Natural killer cell (primary cell): ENCODE measurements at regions of chr14 and their contacts with region 1.

Region 1: GRCh38 chr14:51884086-51884927 is 23.9 kb downstream of the GNG2 start:
- DNase-seq: peak in 1 of 2 donors; percentile 37
- ATAC-seq: peak; percentile 69 to 87 (median 75)
- H3K4me3 ChIP-seq: no peak overlapping the region
- H3K4me3 Mint-ChIP-seq: peak overlapping the region; percentile 86
- H3K27ac ChIP-seq: peak overlapping the region; percentile 76
- H3K27ac Mint-ChIP-seq: peak overlapping the region; percentile 94 to 99
- H3K4me1 ChIP-seq: peaks cover 30% of the 10 kb centered on the region
- H3K4me1 Mint-ChIP-seq: peaks cover 82 to 87% of the 10 kb centered on the region in 2 donors
- H3K27me3 ChIP-seq: no peaks in the 10 kb centered on the region
- H3K27me3 Mint-ChIP-seq: no peaks in the 10 kb centered on the region
- CTCF ChIP-seq: no peak

Region 2: DNA sequence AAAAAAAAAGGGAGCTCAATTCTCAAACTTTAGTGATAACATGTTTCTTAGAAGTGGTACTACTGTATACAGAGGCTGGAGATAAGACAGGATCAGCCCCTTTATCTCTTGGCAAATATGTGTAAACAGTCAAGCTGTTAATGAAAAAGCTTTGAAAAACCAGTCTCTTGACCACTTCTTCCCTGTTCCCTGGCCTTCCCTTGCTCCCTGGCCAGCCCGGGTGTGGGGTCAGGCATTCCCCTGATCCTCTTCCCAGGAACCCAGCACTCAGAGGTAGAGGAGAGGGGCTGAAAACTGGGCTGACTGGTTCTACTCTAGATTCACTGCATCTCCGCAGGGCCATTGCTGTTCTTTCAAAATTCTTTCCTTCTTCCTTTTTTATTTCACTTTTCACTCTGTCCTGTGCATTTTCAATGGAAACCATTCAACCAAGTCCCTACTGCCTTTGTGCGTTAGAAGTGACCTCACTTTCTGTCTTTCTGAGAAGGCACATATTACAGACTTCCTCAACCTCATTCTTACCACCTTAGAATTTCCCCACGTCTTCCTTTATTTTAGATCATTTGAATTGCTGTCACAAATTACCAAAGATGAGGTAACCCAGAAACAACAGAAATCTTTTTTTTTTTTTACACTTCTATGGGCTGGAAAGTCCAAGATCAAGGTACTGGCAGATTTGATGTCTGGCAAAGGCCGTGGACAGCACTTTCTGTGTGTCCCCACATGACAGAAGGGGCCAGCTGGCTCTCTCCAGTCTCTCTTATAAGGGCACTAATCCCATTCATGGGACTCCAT is 18.2 kb before region 1 on chr14:
- intact Hi-C with region 1: loop called (anchors 2 kb)
- DNase-seq: peak; percentile 54 to 76
- ATAC-seq: peak; percentile 47 to 74 (median 69)
- H3K4me3 ChIP-seq: no peak overlapping the region
- H3K4me3 Mint-ChIP-seq: no peak overlapping the region
- H3K27ac ChIP-seq: peak overlapping the region; percentile 82
- H3K27ac Mint-ChIP-seq: no peak overlapping the region
- H3K4me1 ChIP-seq: peaks cover 50% of the 10 kb centered on the region
- H3K4me1 Mint-ChIP-seq: peaks cover 32 to 36% of the 10 kb centered on the region in 2 donors
- H3K27me3 ChIP-seq: no peaks in the 10 kb centered on the region
- H3K27me3 Mint-ChIP-seq: no peaks in the 10 kb centered on the region
- CTCF ChIP-seq: no peak

Region 3: GRCh38 chr14:51901475-51902024 is 17.2 kb after region 1 on chr14:
- intact Hi-C with region 1: loop called (anchors 2 kb)
- DNase-seq: peak in 1 of 2 donors; percentile 66
- ATAC-seq: peak; percentile 20 to 37 (median 32)
- H3K4me3 ChIP-seq: no peak overlapping the region
- H3K4me3 Mint-ChIP-seq: peak overlapping the region; percentile 53
- H3K27ac ChIP-seq: no peak overlapping the region
- H3K27ac Mint-ChIP-seq: peak overlapping the region; percentile 86 to 94
- H3K4me1 ChIP-seq: peaks cover 22% of the 10 kb centered on the region
- H3K4me1 Mint-ChIP-seq: peaks cover 86 to 91% of the 10 kb centered on the region in 2 donors
- H3K27me3 ChIP-seq: no peaks in the 10 kb centered on the region
- H3K27me3 Mint-ChIP-seq: no peaks in the 10 kb centered on the region
- CTCF ChIP-seq: no peak